Posterior cingulate gyrus (tissue), 11 donors: ENCODE measurements at regions of chr2 and their contacts with region 1.

Region 1: DNA sequence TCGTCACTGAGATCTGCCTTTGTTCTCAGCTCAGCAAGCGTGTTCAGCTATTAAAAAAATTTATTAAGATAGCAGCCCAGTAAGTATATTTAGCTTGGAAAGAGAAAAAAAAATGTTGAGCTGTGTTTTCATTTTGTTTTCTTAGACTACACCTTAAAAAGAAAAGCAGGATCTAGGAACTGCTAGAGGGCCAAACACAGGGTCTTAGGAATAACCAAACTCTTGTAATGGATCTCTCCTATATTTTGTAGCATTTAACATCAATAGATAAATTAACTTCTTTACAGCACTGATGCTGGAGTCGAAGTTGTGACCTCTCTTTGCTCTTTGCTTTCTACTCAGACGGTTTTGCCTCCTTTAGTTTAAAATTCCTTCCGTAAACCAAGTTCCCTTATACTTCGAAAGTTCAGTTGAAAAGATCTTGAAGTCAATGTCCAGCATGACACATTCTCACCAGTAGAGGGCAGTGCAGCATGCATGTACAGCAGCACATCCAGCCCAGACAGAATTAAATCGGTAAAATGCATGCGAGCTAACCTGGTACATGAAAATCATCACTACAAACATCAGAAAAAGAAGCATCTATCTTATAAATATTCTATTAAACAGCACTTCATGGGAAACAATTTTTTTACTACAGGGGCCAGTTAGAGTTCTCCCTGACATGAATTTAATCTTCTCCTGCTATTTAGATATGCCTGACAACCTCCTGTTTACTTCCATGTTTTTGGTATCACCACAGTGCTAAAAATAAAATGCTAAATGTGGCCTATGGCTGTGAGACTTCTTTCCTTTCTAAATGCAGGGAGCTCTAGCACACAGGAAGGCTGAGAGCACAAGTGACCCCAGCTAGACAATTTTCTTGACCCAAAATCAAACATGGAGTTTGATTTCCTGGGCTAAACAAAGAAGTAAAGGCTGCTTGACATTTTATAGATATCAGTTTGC is 48.2 kb upstream of the MAP3K20 start:
- DNase-seq: peak in 9 of 10 donors; percentile 34 to 94 (median 79)

Region 2: GRCh38 chr2:172864182-172864581 is 163.3 kb before region 1 on chr2:
- intact Hi-C with region 1: no loop called
- DNase-seq: peak in 7 of 10 donors; percentile 35 to 89 (median 64)

Region 3: GRCh38 chr2:173210270-173211196 is 183.1 kb after region 1 on chr2:
- intact Hi-C with region 1: loop called (anchors 1 kb)
- DNase-seq: peak in 5 of 10 donors; percentile 30 to 90 (median 60)